Left lung (tissue), 14 donors: ENCODE measurements at regions of chr11 and their contacts with region 1.

Region 1: GRCh38 chr11:86456052-86456939 is 81.6 kb downstream of the CCDC81 start:
- DNase-seq: peak; percentile 73 to 87 (median 77)
- ATAC-seq: peak; percentile 89
- H3K4me3 ChIP-seq: no peak overlapping the region
- H3K27ac ChIP-seq: no peak overlapping the region
- H3K4me1 ChIP-seq: peaks cover 4 to 15% of the 10 kb centered on the region in 2 donors
- H3K27me3 ChIP-seq: no peaks in the 10 kb centered on the region
- CTCF ChIP-seq: peak; percentile 92 to 93

Region 2: GRCh38 chr11:86610559-86611341 is 154.5 kb after region 1 on chr11:
- intact Hi-C with region 1: loop called in 1 of 2 experiments (anchors 10 kb)
- DNase-seq: no peak
- ATAC-seq: no peak
- H3K4me3 ChIP-seq: no peak overlapping the region
- H3K27ac ChIP-seq: no peak overlapping the region
- H3K4me1 ChIP-seq: peaks cover 6 to 18% of the 10 kb centered on the region in 2 donors
- H3K27me3 ChIP-seq: no peaks in the 10 kb centered on the region
- CTCF ChIP-seq: no peak

Region 3: DNA sequence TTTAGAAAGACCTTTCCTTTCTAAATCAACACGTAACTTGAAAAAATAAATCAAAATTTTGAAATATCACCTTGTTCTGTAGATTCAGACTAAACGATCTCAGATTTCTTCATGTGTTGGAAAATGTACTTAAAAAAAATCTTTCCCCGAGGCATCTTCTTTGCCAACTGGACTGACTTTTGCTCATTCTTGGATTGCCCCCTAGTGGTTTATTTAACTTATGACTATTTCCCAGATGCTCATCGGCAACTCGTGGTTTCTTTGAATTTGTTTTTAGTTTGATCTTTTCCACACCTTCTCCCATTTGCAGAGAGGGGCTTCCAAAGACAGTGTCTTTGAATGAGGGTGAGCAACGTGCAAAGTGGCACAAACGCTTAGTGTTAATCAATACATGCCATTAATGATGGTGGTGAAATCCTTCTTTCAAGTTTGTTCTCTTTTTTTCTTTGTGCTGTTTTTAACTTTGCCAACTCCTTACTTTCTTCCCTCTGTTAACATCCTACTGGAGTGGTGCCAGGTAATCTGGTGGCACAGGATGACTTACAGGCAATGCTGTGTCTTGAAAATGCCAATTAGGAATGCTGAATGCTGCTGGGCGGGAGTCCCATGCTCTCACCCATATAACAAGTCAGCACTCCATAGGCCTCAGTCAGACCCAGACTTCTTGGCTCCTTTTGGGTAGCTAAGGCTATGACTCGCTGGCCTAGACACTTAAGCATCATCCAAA is 362.3 kb after region 1 on chr11:
- intact Hi-C with region 1: loop called in 1 of 2 experiments (anchors 5 kb)
- DNase-seq: peak in 2 of 4 donors; percentile 67 to 77
- ATAC-seq: peak; percentile 85
- H3K4me3 ChIP-seq: no peak overlapping the region
- H3K27ac ChIP-seq: no peak overlapping the region
- H3K4me1 ChIP-seq: peaks cover 0 to 9% of the 10 kb centered on the region in 2 donors
- H3K27me3 ChIP-seq: no peaks in the 10 kb centered on the region
- CTCF ChIP-seq: peak; percentile 61 to 75